ENCODE measurements at regions of chr16 and their contacts with region 1.

Region 1: DNA sequence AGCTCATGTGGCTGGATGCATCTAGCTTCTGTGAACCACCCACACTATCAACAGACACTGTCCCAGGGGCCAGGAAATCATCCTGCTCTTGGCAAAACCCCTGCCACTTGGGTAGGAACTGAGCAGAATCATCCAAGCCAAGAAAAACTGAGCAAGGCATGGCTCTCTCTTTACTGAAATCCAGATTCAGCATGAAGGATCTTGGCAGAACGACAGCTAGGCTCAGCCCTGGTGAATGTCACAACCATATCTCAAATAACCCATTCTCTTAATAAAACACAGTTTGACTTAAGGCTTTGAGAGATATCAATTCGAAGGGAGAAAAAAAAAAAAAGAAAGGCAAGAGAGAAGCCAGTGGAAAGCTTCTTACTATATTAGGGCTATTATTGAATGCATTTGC is 72.2 kb downstream of the MAF start:
- DNase-seq: no peak
- ATAC-seq: no peak
- H3K4me3 ChIP-seq: no peak overlapping the region
- H3K27ac ChIP-seq: no peak overlapping the region
- H3K4me1 ChIP-seq: peaks cover 20% of the 10 kb centered on the region
- H3K27me3 ChIP-seq: no peaks in the 10 kb centered on the region
- CTCF ChIP-seq: no peak

Region 2: DNA sequence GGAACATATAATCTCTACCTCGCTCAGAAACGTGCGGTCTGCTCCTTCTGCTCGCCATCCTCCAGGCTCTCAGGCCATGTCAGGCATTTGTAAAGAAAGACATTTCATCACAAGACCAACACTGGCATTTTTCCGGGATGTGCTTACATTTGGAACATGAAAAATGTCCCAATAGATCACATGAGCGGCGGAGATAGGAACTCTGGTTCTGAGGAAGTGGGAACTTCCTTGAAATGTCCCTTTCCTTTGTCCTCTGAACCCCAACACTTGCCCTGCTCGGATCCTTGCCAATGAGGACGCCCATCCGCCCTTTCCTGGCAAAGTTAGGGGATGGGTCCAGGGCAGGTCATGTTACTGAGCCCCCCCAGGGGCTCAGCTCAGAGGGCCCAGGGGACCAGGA is 58.3 kb before region 1 on chr16:
- intact Hi-C with region 1: loop called in 1 of 2 experiments (anchors 5 kb)
- DNase-seq: no peak
- ATAC-seq: no peak
- H3K4me3 ChIP-seq: no peak overlapping the region
- H3K27ac ChIP-seq: no peak overlapping the region
- H3K4me1 ChIP-seq: peaks cover 15% of the 10 kb centered on the region
- H3K27me3 ChIP-seq: no peaks in the 10 kb centered on the region
- CTCF ChIP-seq: no peak

Region 3: GRCh38 chr16:80167657-80168390 is 639.5 kb after region 1 on chr16:
- intact Hi-C with region 1: no loop called
- DNase-seq: no peak
- ATAC-seq: no peak
- H3K4me3 ChIP-seq: no peak overlapping the region
- H3K27ac ChIP-seq: no peak overlapping the region
- H3K4me1 ChIP-seq: no peaks in the 10 kb centered on the region
- H3K27me3 ChIP-seq: peaks cover 0 to 4% (median 0%) of the 10 kb centered on the region in 3 donors
- CTCF ChIP-seq: no peak

Measured in psoas muscle (tissue), 8 donors.